Left ventricle myocardium inferior (tissue), 1 donor: ENCODE measurements at regions of chr15 and their contacts with region 1.

Region 1: DNA sequence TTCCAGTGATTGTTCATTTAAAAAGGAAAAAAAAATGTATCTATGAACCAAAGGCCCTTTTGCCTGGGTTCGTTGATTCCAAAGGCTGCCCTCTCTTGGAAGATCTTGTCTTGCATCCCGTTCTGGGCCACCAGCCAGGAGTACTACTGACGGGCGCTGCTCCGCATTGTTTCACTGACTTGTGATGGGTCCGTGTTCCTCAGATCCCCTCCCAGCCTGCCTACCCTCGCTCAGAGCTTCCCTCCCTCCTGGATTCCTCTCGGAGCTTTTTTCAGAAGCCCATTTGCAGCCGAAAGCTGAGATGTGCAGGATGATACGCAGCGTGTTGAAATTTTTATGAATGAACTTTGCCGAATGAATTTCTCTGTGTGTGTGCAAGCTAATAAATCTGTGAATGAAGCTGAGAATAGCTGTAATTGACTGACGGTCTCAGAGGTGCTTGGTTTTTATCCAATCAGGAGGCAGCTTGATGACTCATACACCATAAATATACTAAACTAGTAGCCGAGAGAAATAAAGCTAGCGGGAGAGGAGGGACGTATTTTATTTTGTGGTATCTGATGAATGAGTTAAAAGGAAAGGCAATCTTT is at the start of gene SHC4:
- DNase-seq: peak; percentile 64
- H3K4me3 ChIP-seq: peak within 1 kb of the TSS; percentile 75
- H3K27ac ChIP-seq: peak within 1 kb of the TSS; percentile 74
- H3K4me1 ChIP-seq: peaks cover 28% of the 10 kb centered on the region
- H3K27me3 ChIP-seq: no peaks in the 10 kb centered on the region
- CTCF ChIP-seq: peak; percentile 44
- total RNA-seq, gene SHC4: 3.3 TPM

Region 2: GRCh38 chr15:48877630-48878595 is 85.7 kb before region 1 on chr15 and contains the start of gene EID1:
- intact Hi-C with region 1: loop called (anchors 10 kb)
- DNase-seq: peak; percentile 92
- H3K4me3 ChIP-seq: peak within 1 kb of the TSS; percentile 78
- H3K27ac ChIP-seq: peak within 1 kb of the TSS; percentile 94
- H3K4me1 ChIP-seq: peaks cover 27% of the 10 kb centered on the region
- H3K27me3 ChIP-seq: no peaks in the 10 kb centered on the region
- CTCF ChIP-seq: no peak
- total RNA-seq, gene EID1: 227 TPM